T-cell (primary cell): ENCODE measurements at regions of chr14 and their contacts with region 1.

Region 1: DNA sequence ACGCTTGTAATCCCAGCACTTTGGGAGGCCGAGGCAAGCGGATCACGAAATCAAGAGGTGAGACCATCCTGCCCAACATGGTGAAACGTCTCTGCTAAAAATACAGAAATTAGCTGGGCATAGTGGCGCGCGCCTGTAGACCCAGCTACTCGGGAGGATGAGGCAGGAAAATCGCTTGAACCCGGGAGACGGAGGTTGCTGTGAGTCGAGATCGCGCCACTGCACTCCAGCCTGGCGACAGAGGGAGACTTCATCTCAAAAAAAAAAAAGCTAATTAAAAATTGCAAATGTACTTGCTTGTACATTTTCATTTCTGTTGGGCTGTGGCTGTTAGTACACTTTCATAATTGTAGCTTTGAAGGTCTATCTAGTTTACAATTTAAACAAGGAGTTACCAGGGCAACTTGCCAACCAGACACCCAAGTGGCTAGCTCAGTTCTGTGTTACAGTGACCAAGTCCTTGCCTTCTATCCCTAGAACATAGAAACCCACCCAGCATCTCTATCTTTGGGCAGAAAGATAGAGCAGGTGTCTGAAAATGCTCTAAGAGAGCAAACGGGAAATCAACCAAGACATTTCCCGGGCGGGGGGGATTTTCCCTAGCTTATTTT is 1.2 kb downstream of the COA8 start:
- DNase-seq: no peak
- ATAC-seq: no peak
- H3K4me3 ChIP-seq: peak overlapping the region; percentile 75 to 87
- H3K4me3 Mint-ChIP-seq: peak overlapping the region; percentile 92 to 98 (median 93)
- H3K27ac ChIP-seq: no peak overlapping the region
- H3K27ac Mint-ChIP-seq: peak overlapping the region in 1 of 2 donors; percentile 61
- H3K4me1 ChIP-seq: peaks cover 18 to 42% of the 10 kb centered on the region in 2 experiments
- H3K4me1 Mint-ChIP-seq: peaks cover 44 to 61% (median 50%) of the 10 kb centered on the region in 3 donors
- H3K27me3 ChIP-seq: no peaks in the 10 kb centered on the region
- H3K27me3 Mint-ChIP-seq: no peaks in the 10 kb centered on the region

Region 2: DNA sequence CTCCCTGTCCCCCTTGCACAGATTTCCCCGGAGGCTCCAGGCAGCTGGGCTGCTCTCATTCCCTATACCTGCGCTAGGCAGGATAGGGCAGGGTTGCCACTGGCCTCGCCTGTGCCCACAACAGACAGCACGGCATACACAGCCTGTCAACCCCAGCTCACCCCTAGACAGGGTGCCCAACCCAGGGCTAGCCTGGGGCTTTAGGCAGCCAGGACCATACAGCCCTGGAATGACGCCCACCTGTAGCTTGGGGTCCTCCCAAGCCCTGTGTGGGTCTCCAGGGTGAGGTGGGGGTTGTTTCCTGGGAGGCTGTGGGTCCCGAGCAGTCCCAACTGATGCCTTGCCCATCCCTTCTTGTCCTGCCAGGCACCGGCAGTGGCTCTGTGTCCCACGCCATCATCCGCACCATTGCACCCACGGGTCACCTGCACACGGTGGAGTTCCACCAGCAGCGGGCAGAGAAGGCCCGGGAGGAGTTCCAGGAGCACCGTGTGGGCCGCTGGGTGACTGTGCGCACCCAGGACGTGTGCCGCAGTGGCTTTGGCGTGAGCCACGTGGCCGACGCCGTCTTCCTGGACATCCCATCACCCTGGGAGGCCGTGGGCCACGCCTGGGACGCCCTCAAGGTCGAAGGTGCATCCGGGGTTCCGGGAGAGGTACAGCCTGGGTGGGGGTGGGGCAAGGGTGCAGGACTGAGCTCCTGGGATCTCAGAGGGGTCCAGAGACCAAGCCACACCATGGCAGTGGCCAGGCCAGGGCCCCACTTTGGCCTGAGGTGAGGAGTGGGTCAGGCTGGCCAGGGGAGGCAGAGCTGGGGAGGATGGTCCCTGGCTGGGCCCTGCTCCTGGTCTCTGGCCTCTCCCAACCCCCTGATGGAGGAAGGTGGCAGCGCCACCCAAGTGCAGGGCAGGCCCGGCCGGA is 31.5 kb before region 1 on chr14:
- CTCF ChIA-PET with region 1: interaction called in 1 of 2 experiments, 3 read pairs
- POLR2A ChIA-PET with region 1: interaction called in 1 of 2 experiments, 11 read pairs
- DNase-seq: no peak
- ATAC-seq: no peak
- H3K4me3 ChIP-seq: no peak overlapping the region
- H3K4me3 Mint-ChIP-seq: no peak overlapping the region
- H3K27ac ChIP-seq: no peak overlapping the region
- H3K27ac Mint-ChIP-seq: no peak overlapping the region
- H3K4me1 ChIP-seq: peaks cover 13 to 40% of the 10 kb centered on the region in 2 experiments
- H3K4me1 Mint-ChIP-seq: peaks cover 30 to 41% (median 38%) of the 10 kb centered on the region in 3 donors
- H3K27me3 ChIP-seq: no peaks in the 10 kb centered on the region
- H3K27me3 Mint-ChIP-seq: no peaks in the 10 kb centered on the region

Region 3: GRCh38 chr14:103676881-103677675 is 113.1 kb after region 1 on chr14:
- CTCF ChIA-PET with region 1: no interaction called
- POLR2A ChIA-PET with region 1: no interaction called
- DNase-seq: no peak
- ATAC-seq: no peak
- H3K4me3 ChIP-seq: no peak overlapping the region
- H3K4me3 Mint-ChIP-seq: no peak overlapping the region
- H3K27ac ChIP-seq: no peak overlapping the region
- H3K27ac Mint-ChIP-seq: peak overlapping the region in 1 of 2 donors; percentile 34
- H3K4me1 ChIP-seq: no peaks in the 10 kb centered on the region
- H3K4me1 Mint-ChIP-seq: peaks cover 0 to 3% (median 0%) of the 10 kb centered on the region in 3 donors
- H3K27me3 ChIP-seq: no peaks in the 10 kb centered on the region
- H3K27me3 Mint-ChIP-seq: no peaks in the 10 kb centered on the region